ENCODE measurements at regions of chr1 and their contacts with region 1.

Region 1: DNA sequence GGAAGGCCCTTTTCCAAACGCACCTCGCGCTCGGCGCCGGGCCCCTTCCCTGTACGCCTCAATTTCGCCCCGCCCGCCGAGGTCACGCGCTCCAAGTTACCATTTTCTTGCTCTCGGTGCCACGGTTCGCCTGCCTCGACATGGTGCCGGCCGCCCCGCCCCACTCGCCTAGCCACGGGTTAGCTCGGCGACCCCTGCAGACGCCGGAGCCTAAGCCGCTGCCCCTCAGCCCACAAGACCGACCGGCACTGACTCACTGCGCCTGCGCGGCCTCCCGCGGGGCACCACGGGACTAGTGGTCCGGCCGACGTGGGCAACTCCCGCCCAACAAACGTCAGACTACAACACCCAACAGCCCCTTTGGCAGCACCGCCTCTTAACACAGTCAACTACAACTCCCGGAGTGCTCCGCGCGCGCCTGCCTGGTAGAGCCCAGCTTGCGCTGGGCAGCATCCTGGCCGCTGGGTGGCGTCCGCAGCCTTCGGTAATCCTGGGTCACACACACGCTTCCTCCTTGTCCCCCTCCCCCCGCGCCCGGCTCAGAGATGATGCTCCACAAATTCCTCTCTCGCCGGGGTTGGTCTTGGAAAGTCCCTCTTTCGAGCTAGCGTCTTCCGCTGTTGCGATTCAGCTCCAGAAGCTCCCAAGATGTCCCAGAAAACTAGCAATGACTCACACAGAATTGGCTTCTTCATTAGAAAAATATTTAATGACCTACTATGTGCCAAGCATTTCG is at the start of gene TRAPPC3:
- DNase-seq: peak; percentile 100
- H3K4me3 Mint-ChIP-seq: peak within 1 kb of the TSS; percentile 95
- H3K27ac Mint-ChIP-seq: peak within 1 kb of the TSS; percentile 92
- H3K4me1 Mint-ChIP-seq: peaks cover 74% of the 10 kb centered on the region
- H3K27me3 Mint-ChIP-seq: no peaks in the 10 kb centered on the region

Region 2: GRCh38 chr1:36034692-36035091 is 114.7 kb before region 1 on chr1:
- CTCF ChIA-PET with region 1: no interaction called
- DNase-seq: no peak
- H3K4me3 Mint-ChIP-seq: no peak overlapping the region
- H3K27ac Mint-ChIP-seq: no peak overlapping the region
- H3K4me1 Mint-ChIP-seq: no peaks in the 10 kb centered on the region
- H3K27me3 Mint-ChIP-seq: no peaks in the 10 kb centered on the region

Region 3: DNA sequence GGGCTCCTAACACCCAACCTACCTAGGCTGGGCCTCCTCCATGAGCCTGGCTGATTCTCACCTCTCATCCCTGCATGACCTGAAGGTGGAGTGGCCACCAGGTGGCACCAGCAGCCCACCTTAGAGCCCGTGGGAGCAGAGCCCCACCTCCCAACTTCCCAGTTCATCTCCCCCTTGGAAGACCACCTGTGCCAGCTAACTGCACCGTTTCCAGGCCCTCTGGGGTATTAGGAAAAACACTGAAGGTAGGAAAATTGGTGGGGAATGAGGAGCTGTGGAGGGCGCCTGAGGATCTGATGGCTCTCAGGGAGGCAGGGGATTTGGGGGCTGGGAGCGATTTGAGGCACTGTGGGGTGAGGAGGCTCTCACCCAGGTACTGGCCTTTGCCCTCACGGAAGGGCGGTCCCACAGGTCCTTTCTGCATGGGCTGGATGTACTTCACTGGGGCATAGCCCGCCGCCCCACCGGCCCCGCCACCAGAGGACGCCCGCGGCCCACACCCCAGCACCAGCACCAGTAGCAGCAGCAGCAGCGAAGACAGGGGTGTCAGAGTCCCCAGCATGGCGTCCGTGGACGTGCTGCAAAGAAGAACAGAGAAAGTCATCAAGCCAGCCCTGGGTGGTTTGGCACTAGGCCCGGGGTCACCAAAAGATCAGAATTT is 49.6 kb before region 1 on chr1:
- CTCF ChIA-PET with region 1: interaction called, 18 read pairs
- DNase-seq: peak; percentile 85
- H3K4me3 Mint-ChIP-seq: no peak overlapping the region
- H3K27ac Mint-ChIP-seq: no peak overlapping the region
- H3K4me1 Mint-ChIP-seq: peaks cover 3% of the 10 kb centered on the region
- H3K27me3 Mint-ChIP-seq: peaks cover 9% of the 10 kb centered on the region

Region 4: DNA sequence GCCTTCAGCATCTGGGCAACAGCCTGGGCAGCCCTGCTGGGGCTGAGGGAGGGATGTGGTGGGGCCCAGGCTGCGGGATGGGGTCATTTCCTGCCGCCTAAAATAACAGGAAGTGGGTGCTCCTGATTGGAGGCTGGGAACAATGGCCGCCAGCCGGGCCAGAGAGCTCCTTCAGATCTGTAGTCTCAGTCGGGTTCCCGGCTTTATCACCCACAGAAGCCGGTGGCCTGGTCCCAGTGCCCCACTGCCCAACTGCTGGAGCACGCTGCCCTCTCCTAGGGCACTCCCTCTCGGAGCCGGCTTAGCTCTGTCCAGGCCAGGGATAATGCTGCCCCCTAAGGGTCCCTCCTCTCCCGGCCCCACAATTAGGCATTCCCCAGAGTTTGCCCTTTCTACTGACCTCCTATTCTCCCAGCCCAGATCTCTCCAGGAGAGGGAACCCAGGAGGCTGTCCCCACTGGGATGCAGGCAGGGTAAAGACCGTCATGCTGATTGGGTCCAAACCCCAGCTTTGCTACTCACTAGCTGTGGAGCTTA is 11.6 kb after region 1 on chr1:
- CTCF ChIA-PET with region 1: interaction called, 72 read pairs
- DNase-seq: peak; percentile 86
- H3K4me3 Mint-ChIP-seq: peak overlapping the region; percentile 71
- H3K27ac Mint-ChIP-seq: peak overlapping the region; percentile 91
- H3K4me1 Mint-ChIP-seq: peaks cover 69% of the 10 kb centered on the region
- H3K27me3 Mint-ChIP-seq: no peaks in the 10 kb centered on the region

Region 5: DNA sequence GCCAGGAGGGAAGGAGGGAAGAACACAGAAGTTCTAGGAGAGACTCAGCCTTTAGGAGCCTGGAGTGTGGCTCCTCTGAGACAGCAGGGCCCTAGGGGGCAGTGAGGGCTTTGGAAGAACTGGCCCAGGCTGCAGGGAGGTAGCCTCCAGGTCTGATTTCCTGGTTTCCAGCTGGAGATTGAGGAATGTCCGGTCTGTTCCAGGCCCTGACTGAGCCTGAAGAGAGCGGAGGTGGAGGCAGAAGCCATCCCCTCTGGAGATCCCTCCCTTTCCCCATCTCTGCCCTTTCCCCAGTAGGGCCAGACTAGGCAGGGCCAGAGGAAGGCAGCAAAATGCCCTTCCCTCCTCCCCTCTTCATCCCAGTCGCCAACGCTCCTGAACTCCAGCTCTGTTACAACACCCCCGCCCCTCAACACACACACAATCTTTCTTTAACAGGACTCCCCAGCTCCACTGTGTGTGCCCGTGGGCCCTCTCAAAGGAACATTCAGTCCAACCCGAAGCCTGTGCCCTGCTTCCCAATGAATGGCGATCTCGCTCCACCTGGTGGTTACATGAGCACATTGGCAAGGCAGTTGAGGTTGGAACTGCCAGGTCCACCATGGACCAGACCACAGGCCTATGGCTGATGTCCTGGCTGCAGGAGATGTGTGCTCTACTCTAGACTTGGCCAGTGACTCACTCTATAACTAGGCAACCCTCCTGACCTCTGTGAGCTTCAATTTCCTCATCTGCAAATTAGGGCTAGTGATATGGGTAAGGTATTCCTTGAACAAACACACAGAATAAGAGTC is 38.6 kb after region 1 on chr1:
- CTCF ChIA-PET with region 1: interaction called, 179 read pairs
- DNase-seq: peak; percentile 89
- H3K4me3 Mint-ChIP-seq: no peak overlapping the region
- H3K27ac Mint-ChIP-seq: peak overlapping the region; percentile 24
- H3K4me1 Mint-ChIP-seq: peaks cover 12% of the 10 kb centered on the region
- H3K27me3 Mint-ChIP-seq: no peaks in the 10 kb centered on the region

Region 6: GRCh38 chr1:36273024-36273423 is 123.6 kb after region 1 on chr1:
- CTCF ChIA-PET with region 1: no interaction called
- DNase-seq: no peak
- H3K4me3 Mint-ChIP-seq: no peak overlapping the region
- H3K27ac Mint-ChIP-seq: no peak overlapping the region
- H3K4me1 Mint-ChIP-seq: peaks cover 6% of the 10 kb centered on the region
- H3K27me3 Mint-ChIP-seq: no peaks in the 10 kb centered on the region

Region 7: DNA sequence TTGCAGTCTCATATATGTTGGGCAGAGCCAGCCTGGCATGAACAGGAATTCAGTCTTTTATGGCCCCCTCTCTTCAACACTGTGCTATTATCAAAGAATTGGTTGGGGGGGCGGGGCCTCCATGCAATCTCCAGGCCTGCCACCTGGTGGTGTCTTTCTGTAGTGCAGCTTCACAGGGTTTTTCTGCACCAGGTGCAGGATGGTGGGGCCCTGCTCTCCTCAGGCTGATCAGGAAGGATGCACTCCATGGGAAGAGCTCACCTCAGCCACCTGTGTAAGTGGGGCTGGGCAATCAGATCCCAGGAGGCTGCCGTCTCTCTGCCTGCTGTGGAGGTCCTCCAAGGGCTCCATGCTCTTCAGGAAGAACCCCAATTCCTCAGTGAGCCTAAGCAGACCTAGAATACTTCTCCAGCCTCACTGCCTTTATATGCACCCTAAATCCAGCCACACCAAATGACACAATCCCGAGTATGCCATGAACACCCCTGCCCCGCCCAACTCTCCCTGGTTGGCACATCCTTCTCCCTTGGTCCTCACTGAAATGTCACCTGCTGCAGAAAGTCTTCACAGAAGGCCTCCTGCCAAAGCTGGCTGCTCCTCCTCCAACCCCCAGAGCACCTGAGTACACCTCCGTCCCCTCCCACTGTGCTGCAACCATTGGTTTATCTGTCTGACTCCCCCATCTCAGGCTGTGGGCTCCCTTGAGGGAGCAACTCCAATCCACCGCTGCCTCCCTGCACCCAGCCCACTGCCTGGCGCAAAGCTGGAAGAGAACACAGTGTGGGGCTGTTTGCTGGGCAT is 219.9 kb after region 1 on chr1:
- CTCF ChIA-PET with region 1: interaction called, 17 read pairs
- DNase-seq: peak; percentile 89
- H3K4me3 Mint-ChIP-seq: no peak overlapping the region
- H3K27ac Mint-ChIP-seq: peak overlapping the region; percentile 96
- H3K4me1 Mint-ChIP-seq: peaks cover 78% of the 10 kb centered on the region
- H3K27me3 Mint-ChIP-seq: no peaks in the 10 kb centered on the region

Measured in activated naive CD4-positive, alpha-beta T cell treated with anti-CD3 and anti-CD28 coated beads, Interleukin-2, amount 10 ng/mL, durations not matched to agents 7 days and 5 days (primary cell).